WTC11 (cell line): ENCODE measurements at regions of chr6 and their contacts with region 1.

Region 1: GRCh38 chr6:3330199-3330598 is 71.5 kb downstream of the PSMG4 start:
- DNase-seq: peak; percentile 69
- ATAC-seq: peak; percentile 37
- H3K4me3 Mint-ChIP-seq: no peak overlapping the region
- H3K27ac Mint-ChIP-seq: peak overlapping the region; percentile 88
- H3K4me1 Mint-ChIP-seq: peaks cover 87% of the 10 kb centered on the region
- H3K27me3 Mint-ChIP-seq: no peaks in the 10 kb centered on the region
- CTCF ChIP-seq: peak; percentile 57

Region 2: GRCh38 chr6:3281631-3282475 is 48.3 kb before region 1 on chr6:
- CTCF ChIA-PET with region 1: interaction called, 12 read pairs
- POLR2A ChIA-PET with region 1: no interaction called
- DNase-seq: peak; percentile 16
- ATAC-seq: peak; percentile 12
- H3K4me3 Mint-ChIP-seq: no peak overlapping the region
- H3K27ac Mint-ChIP-seq: peak overlapping the region; percentile 92
- H3K4me1 Mint-ChIP-seq: peaks cover 25% of the 10 kb centered on the region
- H3K27me3 Mint-ChIP-seq: no peaks in the 10 kb centered on the region
- CTCF ChIP-seq: no peak

Region 3: GRCh38 chr6:3318821-3319540 is 11.2 kb before region 1 on chr6:
- CTCF ChIA-PET with region 1: interaction called, 13 read pairs
- POLR2A ChIA-PET with region 1: no interaction called
- DNase-seq: no peak
- ATAC-seq: no peak
- H3K4me3 Mint-ChIP-seq: no peak overlapping the region
- H3K27ac Mint-ChIP-seq: peak overlapping the region; percentile 18
- H3K4me1 Mint-ChIP-seq: peaks cover 6% of the 10 kb centered on the region
- H3K27me3 Mint-ChIP-seq: no peaks in the 10 kb centered on the region
- CTCF ChIP-seq: no peak

Region 4: GRCh38 chr6:3341467-3341866 is 11.3 kb after region 1 on chr6:
- CTCF ChIA-PET with region 1: interaction called, 38 read pairs
- POLR2A ChIA-PET with region 1: no interaction called
- DNase-seq: no peak
- ATAC-seq: peak; percentile 26
- H3K4me3 Mint-ChIP-seq: peak overlapping the region; percentile 47
- H3K27ac Mint-ChIP-seq: peak overlapping the region; percentile 98
- H3K4me1 Mint-ChIP-seq: peaks cover 91% of the 10 kb centered on the region
- H3K27me3 Mint-ChIP-seq: no peaks in the 10 kb centered on the region; the same call in 1 of the 2 replicates
- CTCF ChIP-seq: no peak

Region 5: GRCh38 chr6:3372007-3372846 is 42.0 kb after region 1 on chr6:
- CTCF ChIA-PET with region 1: interaction called, 11 read pairs
- POLR2A ChIA-PET with region 1: no interaction called
- DNase-seq: no peak
- ATAC-seq: peak; percentile 69
- H3K4me3 Mint-ChIP-seq: no peak overlapping the region
- H3K27ac Mint-ChIP-seq: no peak overlapping the region; the same call in 1 of the 2 replicates
- H3K4me1 Mint-ChIP-seq: peaks cover 46% of the 10 kb centered on the region
- H3K27me3 Mint-ChIP-seq: no peaks in the 10 kb centered on the region
- CTCF ChIP-seq: no peak

Region 6: DNA sequence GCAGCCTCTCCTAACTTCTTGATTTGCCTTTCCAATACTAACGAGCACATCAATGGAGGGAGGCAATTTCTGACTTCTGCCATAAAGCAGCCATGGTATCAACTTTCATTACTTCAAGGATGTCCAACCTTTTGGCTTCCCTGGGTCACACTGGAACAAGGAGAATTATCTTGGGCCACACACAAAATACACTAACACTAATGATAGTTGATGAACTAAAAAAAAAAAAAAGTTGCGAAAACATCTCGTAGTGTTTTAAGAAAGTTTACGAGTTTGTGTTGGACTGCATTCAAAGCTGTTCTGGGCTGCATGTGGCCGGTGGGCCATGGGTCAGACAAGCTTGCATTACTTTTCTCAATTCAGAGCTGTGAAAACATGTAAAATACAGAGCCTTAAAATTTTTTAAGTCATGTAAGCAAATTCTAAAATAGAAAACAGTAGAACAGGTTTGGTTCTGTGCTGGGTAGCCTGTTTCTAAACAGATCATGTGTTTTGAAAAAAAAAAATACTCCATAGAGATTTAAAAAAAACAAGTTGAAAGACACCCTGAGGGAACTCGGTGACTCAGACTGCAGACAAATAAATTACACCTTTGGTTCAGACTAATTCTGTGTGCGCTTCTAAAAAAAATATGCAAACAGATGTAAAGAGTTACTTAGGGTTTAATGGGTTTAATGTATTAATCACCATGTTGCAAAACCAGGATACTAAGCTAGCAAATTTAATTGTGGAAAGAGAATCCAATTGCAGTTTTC is 170.2 kb after region 1 on chr6:
- CTCF ChIA-PET with region 1: no interaction called
- POLR2A ChIA-PET with region 1: no interaction called
- DNase-seq: no peak
- ATAC-seq: no peak
- H3K4me3 Mint-ChIP-seq: no peak overlapping the region
- H3K27ac Mint-ChIP-seq: no peak overlapping the region
- H3K4me1 Mint-ChIP-seq: peaks cover 17% of the 10 kb centered on the region
- H3K27me3 Mint-ChIP-seq: peaks cover 15% of the 10 kb centered on the region
- CTCF ChIP-seq: no peak